Activated naive CD4-positive, alpha-beta T cell treated with anti-CD3 and anti-CD28 coated beads for 36 hours (primary cell): ENCODE measurements at regions of chr2 and their contacts with region 1.

Region 1: GRCh38 chr2:240021488-240022104 is 3.5 kb downstream of the NDUFA10 start:
- DNase-seq: peak; percentile 79
- H3K4me3 Mint-ChIP-seq: no peak overlapping the region
- H3K27ac Mint-ChIP-seq: no peak overlapping the region
- H3K4me1 Mint-ChIP-seq: peaks cover 23% of the 10 kb centered on the region
- H3K27me3 Mint-ChIP-seq: no peaks in the 10 kb centered on the region

Region 2: GRCh38 chr2:239326831-239327535 is 694.6 kb before region 1 on chr2:
- CTCF ChIA-PET with region 1: no interaction called
- intact Hi-C with region 1: loop called (anchors 5 kb)
- DNase-seq: peak; percentile 94
- H3K4me3 Mint-ChIP-seq: peak overlapping the region; percentile 24
- H3K27ac Mint-ChIP-seq: peak overlapping the region; percentile 81
- H3K4me1 Mint-ChIP-seq: peaks cover 79% of the 10 kb centered on the region
- H3K27me3 Mint-ChIP-seq: no peaks in the 10 kb centered on the region

Region 3: DNA sequence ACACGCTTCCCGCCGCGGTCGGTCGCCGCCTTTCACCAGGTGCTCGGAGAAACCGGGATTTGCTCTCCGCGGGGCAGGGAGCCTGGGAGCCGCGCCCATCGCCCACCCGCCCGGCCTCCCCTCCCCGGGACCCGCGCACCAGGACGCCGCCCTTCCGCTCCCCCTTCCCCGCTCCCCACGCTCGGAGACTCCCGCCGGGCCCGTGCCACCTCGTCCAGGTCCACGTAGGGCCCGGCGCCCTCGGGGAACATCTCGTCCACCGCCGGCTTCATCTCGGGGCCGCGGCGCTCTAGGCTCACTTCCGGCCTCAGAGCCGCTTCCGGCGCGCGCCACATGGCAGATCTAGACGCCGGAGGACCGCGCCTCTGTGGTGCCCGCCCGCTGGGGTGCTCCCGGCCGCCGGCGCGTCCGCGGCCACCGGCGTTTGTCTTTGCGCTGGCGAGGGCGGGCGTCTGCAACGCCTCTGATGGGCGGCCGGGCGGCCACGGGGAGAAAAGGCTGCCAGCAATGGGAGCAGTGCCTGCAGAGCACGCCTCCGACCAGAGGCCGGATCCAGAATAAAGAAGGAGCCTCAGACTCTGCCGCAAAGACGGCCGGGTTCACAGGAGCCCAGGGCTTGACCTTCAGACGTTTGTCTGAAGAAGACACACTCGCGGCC is 114.5 kb after region 1 on chr2 and contains the start of gene COPS9:
- CTCF ChIA-PET with region 1: no interaction called
- intact Hi-C with region 1: loop called (anchors 2 kb)
- DNase-seq: peak; percentile 87
- H3K4me3 Mint-ChIP-seq: peak within 1 kb of the TSS; percentile 90
- H3K27ac Mint-ChIP-seq: peak within 1 kb of the TSS; percentile 74
- H3K4me1 Mint-ChIP-seq: peaks cover 25% of the 10 kb centered on the region
- H3K27me3 Mint-ChIP-seq: no peaks in the 10 kb centered on the region
- total RNA-seq, gene COPS9: 84.5 to 91.3 TPM